ENCODE measurements at regions of chr2 and their contacts with region 1.

Region 1: GRCh38 chr2:119837759-119838158 is 78.0 kb downstream of the PTPN4 start:
- DNase-seq: no peak
- ATAC-seq: no peak
- H3K4me3 ChIP-seq: no peak overlapping the region
- H3K4me3 Mint-ChIP-seq: no peak overlapping the region
- H3K27ac ChIP-seq: no peak overlapping the region
- H3K27ac Mint-ChIP-seq: no peak overlapping the region
- H3K4me1 ChIP-seq: peaks cover 4 to 9% of the 10 kb centered on the region in 2 experiments
- H3K4me1 Mint-ChIP-seq: peaks cover 66 to 71% (median 69%) of the 10 kb centered on the region in 3 donors
- H3K27me3 ChIP-seq: no peaks in the 10 kb centered on the region
- H3K27me3 Mint-ChIP-seq: no peaks in the 10 kb centered on the region

Region 2: DNA sequence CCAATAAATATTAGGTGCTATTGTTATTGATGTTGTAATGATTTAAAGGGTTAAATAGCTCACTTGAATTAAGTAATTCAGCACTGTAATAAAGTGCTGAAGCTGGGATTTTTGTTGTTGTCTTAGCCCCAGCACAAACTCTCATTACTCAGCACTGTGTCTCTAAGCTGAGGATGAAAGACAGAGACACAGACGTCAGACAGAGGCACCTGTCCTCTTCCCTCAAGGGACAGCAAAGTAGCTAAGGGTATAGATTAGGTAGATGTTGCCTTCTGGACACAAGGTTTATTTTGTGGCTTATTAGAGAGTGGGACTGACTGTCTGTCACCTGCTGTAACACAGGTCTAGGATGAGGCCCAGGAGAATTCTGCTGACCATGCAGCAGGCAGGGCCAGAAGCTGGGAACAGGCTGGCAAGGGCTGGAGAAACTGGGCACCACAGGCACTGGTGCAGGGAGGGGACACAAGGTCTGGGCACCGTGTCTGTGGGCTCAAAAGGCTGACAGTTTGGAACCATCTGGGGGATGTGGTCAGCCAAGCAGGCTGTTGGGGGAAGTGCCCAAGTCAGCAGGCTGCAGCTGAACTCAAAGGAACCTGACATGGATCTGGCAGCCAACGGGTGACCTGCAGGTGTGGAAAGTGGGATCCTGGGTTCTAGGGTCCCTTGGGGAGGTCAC is 98.0 kb before region 1 on chr2:
- CTCF ChIA-PET with region 1: no interaction called
- POLR2A ChIA-PET with region 1: no interaction called
- DNase-seq: no peak
- ATAC-seq: no peak
- H3K4me3 ChIP-seq: no peak overlapping the region
- H3K4me3 Mint-ChIP-seq: no peak overlapping the region
- H3K27ac ChIP-seq: no peak overlapping the region
- H3K27ac Mint-ChIP-seq: no peak overlapping the region
- H3K4me1 ChIP-seq: no peaks in the 10 kb centered on the region
- H3K4me1 Mint-ChIP-seq: no peaks in the 10 kb centered on the region
- H3K27me3 ChIP-seq: peaks cover 0 to 3% of the 10 kb centered on the region in 2 experiments
- H3K27me3 Mint-ChIP-seq: peaks cover 2 to 5% of the 10 kb centered on the region in 2 donors

Region 3: GRCh38 chr2:119823734-119824334 is 13.9 kb before region 1 on chr2:
- CTCF ChIA-PET with region 1: no interaction called
- POLR2A ChIA-PET with region 1: no interaction called
- DNase-seq: peak in 27 of 35 experiments; percentile 10 to 62 (median 30)
- ATAC-seq: peak; percentile 68 to 74 (median 71)
- H3K4me3 ChIP-seq: no peak overlapping the region
- H3K4me3 Mint-ChIP-seq: no peak overlapping the region
- H3K27ac ChIP-seq: no peak overlapping the region
- H3K27ac Mint-ChIP-seq: peak overlapping the region; percentile 41 to 48
- H3K4me1 ChIP-seq: peaks cover 0 to 4% of the 10 kb centered on the region in 2 experiments
- H3K4me1 Mint-ChIP-seq: peaks cover 50 to 69% (median 67%) of the 10 kb centered on the region in 3 donors
- H3K27me3 ChIP-seq: no peaks in the 10 kb centered on the region
- H3K27me3 Mint-ChIP-seq: no peaks in the 10 kb centered on the region

Region 4: DNA sequence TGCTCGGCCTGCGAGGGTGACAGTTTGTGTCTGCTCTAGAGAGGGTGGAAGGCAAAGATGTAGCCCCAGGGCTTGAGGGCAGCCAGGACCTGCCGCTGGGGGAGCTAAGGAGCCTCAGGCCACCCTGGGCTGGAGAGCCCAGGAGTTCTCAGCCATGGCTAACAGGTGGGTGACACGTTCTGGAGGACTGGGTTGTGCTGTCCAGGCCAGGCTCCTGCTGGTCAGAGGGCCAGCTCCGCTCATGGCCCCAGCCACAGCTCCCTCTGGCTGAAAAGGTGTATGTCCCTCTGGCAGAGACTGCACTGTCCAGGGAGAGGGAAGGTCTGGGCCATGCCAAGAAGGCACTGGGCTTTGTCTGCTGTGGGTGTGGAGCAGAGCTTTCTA is 366.3 kb after region 1 on chr2:
- CTCF ChIA-PET with region 1: no interaction called
- POLR2A ChIA-PET with region 1: interaction called in 1 of 2 experiments, 11 read pairs
- DNase-seq: no peak
- ATAC-seq: no peak
- H3K4me3 ChIP-seq: no peak overlapping the region
- H3K4me3 Mint-ChIP-seq: no peak overlapping the region
- H3K27ac ChIP-seq: no peak overlapping the region
- H3K27ac Mint-ChIP-seq: no peak overlapping the region
- H3K4me1 ChIP-seq: no peaks in the 10 kb centered on the region
- H3K4me1 Mint-ChIP-seq: peaks cover 0 to under 1% (median 0%) of the 10 kb centered on the region in 3 donors
- H3K27me3 ChIP-seq: no peaks in the 10 kb centered on the region
- H3K27me3 Mint-ChIP-seq: no peaks in the 10 kb centered on the region